T-cell (primary cell): ENCODE measurements at regions of chr7 and their contacts with region 1.

Region 1: GRCh38 chr7:26090927-26091519 is 61.0 kb upstream of the NFE2L3 start:
- DNase-seq: peak in 2 of 35 experiments; percentile 9 to 69
- ATAC-seq: peak; percentile 57 to 75 (median 68)
- H3K4me3 ChIP-seq: no peak overlapping the region
- H3K4me3 Mint-ChIP-seq: peak overlapping the region in 1 of 3 donors; percentile 6
- H3K27ac ChIP-seq: no peak overlapping the region
- H3K27ac Mint-ChIP-seq: peak overlapping the region in 1 of 2 donors; percentile 62
- H3K4me1 ChIP-seq: no peaks in the 10 kb centered on the region
- H3K4me1 Mint-ChIP-seq: peaks cover 16 to 26% (median 24%) of the 10 kb centered on the region in 3 donors
- H3K27me3 ChIP-seq: no peaks in the 10 kb centered on the region
- H3K27me3 Mint-ChIP-seq: no peaks in the 10 kb centered on the region

Region 2: GRCh38 chr7:26078437-26079336 is 12.3 kb before region 1 on chr7:
- CTCF ChIA-PET with region 1: interaction called, 10 to 17 read pairs
- POLR2A ChIA-PET with region 1: no interaction called
- DNase-seq: peak; percentile 69 to 89 (median 82)
- ATAC-seq: peak; percentile 99 to 100 (median 100)
- H3K4me3 ChIP-seq: no peak overlapping the region
- H3K4me3 Mint-ChIP-seq: peak overlapping the region; percentile 9 to 38 (median 31)
- H3K27ac ChIP-seq: no peak overlapping the region
- H3K27ac Mint-ChIP-seq: no peak overlapping the region
- H3K4me1 ChIP-seq: peaks cover 0 to 5% of the 10 kb centered on the region in 2 experiments
- H3K4me1 Mint-ChIP-seq: peaks cover 7 to 11% (median 9%) of the 10 kb centered on the region in 3 donors
- H3K27me3 ChIP-seq: peaks cover 0 to 25% of the 10 kb centered on the region in 2 experiments
- H3K27me3 Mint-ChIP-seq: peaks cover 18 to 31% of the 10 kb centered on the region in 2 donors

Region 3: GRCh38 chr7:26112203-26112740 is 21.2 kb after region 1 on chr7:
- CTCF ChIA-PET with region 1: interaction called, 4 to 10 read pairs
- POLR2A ChIA-PET with region 1: no interaction called
- DNase-seq: peak in 1 of 35 experiments; percentile 43
- ATAC-seq: peak in 3 of 4 experiments; percentile 37 to 44 (median 41)
- H3K4me3 ChIP-seq: no peak overlapping the region
- H3K4me3 Mint-ChIP-seq: no peak overlapping the region
- H3K27ac ChIP-seq: no peak overlapping the region
- H3K27ac Mint-ChIP-seq: peak overlapping the region in 1 of 2 donors; percentile 21
- H3K4me1 ChIP-seq: peaks cover 3% of the 10 kb centered on the region in 2 experiments
- H3K4me1 Mint-ChIP-seq: peaks cover 7 to 8% (median 8%) of the 10 kb centered on the region in 3 donors
- H3K27me3 ChIP-seq: peaks cover 0 to 2% of the 10 kb centered on the region in 2 experiments
- H3K27me3 Mint-ChIP-seq: no peaks in the 10 kb centered on the region